MCF 10A (cell line): ENCODE measurements at regions of chr4 and their contacts with region 1.

Region 1: DNA sequence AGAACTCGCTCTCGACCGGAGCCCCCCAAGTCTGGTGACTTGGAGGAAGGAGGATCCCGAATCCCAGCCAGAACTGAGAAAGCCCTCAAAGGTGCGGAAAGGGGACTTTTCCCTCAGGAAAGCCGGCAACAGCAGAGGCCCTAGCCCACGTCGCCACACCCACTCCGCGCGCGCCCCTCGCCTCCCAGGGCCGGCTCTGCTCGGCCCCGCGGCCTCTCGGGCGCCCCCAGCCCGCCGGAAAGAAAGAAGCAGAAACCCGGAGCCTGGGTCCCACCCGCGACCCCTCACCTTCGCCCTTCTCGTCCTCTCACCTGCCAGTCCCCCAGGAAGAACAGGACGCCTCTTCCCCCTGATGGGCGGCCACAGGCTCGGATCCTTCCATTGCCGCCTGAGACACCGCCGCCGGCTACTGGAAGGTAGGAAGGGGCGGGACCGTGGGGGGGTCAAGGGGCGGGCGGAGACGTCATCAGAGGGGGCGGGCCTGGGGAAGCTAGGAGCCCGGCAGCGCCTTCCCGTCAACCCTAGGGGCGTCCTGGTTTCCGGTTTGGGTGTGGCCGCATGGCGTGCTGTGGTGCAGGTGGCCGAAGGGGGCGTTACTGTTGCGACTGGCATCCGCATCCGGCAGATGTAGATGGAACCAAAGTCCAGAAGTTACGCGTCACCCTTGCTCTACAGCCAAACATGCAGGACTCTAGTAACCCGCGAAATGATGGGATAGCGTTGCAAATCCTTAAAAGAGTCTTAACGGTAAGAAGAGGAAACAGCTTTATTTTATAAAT is at the start of gene UBA6:
- DNase-seq: peak; percentile 97
- H3K4me3 Mint-ChIP-seq: peak within 1 kb of the TSS; percentile 85
- H3K27ac Mint-ChIP-seq: peak within 1 kb of the TSS; percentile 95
- H3K4me1 Mint-ChIP-seq: peaks cover 26% of the 10 kb centered on the region
- H3K27me3 Mint-ChIP-seq: no peaks in the 10 kb centered on the region
- CTCF ChIP-seq: peak; percentile 40
- total RNA-seq, gene UBA6: 83.1 and 97.4 TPM in 2 replicates

Region 2: GRCh38 chr4:66949419-66949818 is 751.5 kb before region 1 on chr4:
- CTCF ChIA-PET with region 1: no interaction called
- POLR2A ChIA-PET with region 1: no interaction called
- intact Hi-C with region 1: no loop called
- DNase-seq: no peak
- H3K4me3 Mint-ChIP-seq: no peak overlapping the region
- H3K27ac Mint-ChIP-seq: no peak overlapping the region
- H3K4me1 Mint-ChIP-seq: no peaks in the 10 kb centered on the region
- H3K27me3 Mint-ChIP-seq: no peaks in the 10 kb centered on the region
- CTCF ChIP-seq: no peak

Region 3: GRCh38 chr4:67712000-67712625 is 11.2 kb after region 1 on chr4:
- CTCF ChIA-PET with region 1: interaction called, 5 read pairs
- POLR2A ChIA-PET with region 1: interaction called, 14 read pairs
- intact Hi-C with region 1: no loop called
- DNase-seq: no peak
- H3K4me3 Mint-ChIP-seq: no peak overlapping the region
- H3K27ac Mint-ChIP-seq: no peak overlapping the region
- H3K4me1 Mint-ChIP-seq: peaks cover 14% of the 10 kb centered on the region
- H3K27me3 Mint-ChIP-seq: no peaks in the 10 kb centered on the region
- CTCF ChIP-seq: no peak

Region 4: DNA sequence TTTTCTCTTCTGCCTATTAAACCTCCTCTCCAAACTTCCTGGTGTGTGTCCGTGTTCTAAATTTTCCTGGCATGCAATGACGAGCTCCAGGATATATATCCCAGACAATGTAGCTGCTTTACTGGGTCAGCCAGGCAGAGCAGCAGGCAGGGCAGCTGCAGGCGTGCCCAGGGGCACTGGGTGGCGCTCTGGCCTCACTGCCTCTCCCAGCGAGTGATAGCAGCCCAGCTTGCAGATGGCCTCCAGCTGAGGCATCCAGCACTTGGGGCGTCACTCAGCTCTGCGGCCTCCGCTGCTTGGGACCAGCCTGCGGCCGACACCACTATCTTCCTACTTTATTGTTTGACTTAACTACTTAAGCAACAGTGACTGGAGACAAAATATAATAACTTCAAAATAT is 23.0 kb after region 1 on chr4:
- CTCF ChIA-PET with region 1: interaction called, 7 read pairs
- POLR2A ChIA-PET with region 1: interaction called, 12 read pairs
- intact Hi-C with region 1: no loop called
- DNase-seq: no peak
- H3K4me3 Mint-ChIP-seq: no peak overlapping the region
- H3K27ac Mint-ChIP-seq: no peak overlapping the region
- H3K4me1 Mint-ChIP-seq: peaks cover 10% of the 10 kb centered on the region
- H3K27me3 Mint-ChIP-seq: no peaks in the 10 kb centered on the region
- CTCF ChIP-seq: no peak

Region 5: GRCh38 chr4:67736262-67736661 is 35.3 kb after region 1 on chr4:
- CTCF ChIA-PET with region 1: no interaction called
- POLR2A ChIA-PET with region 1: no interaction called
- intact Hi-C with region 1: no loop called
- DNase-seq: no peak
- H3K4me3 Mint-ChIP-seq: no peak overlapping the region
- H3K27ac Mint-ChIP-seq: no peak overlapping the region
- H3K4me1 Mint-ChIP-seq: no peaks in the 10 kb centered on the region
- H3K27me3 Mint-ChIP-seq: no peaks in the 10 kb centered on the region
- CTCF ChIP-seq: no peak

Region 6: GRCh38 chr4:67746797-67747495 is 46.0 kb after region 1 on chr4:
- CTCF ChIA-PET with region 1: interaction called, 5 read pairs
- POLR2A ChIA-PET with region 1: no interaction called
- intact Hi-C with region 1: loop called (anchors 2 kb)
- DNase-seq: peak; percentile 39
- H3K4me3 Mint-ChIP-seq: no peak overlapping the region
- H3K27ac Mint-ChIP-seq: no peak overlapping the region
- H3K4me1 Mint-ChIP-seq: peaks cover 10% of the 10 kb centered on the region
- H3K27me3 Mint-ChIP-seq: no peaks in the 10 kb centered on the region
- CTCF ChIP-seq: peak; percentile 48

Region 7: GRCh38 chr4:67762086-67762485 is 61.2 kb after region 1 on chr4:
- CTCF ChIA-PET with region 1: no interaction called
- POLR2A ChIA-PET with region 1: no interaction called
- intact Hi-C with region 1: no loop called
- DNase-seq: peak; percentile 2
- H3K4me3 Mint-ChIP-seq: no peak overlapping the region
- H3K27ac Mint-ChIP-seq: no peak overlapping the region
- H3K4me1 Mint-ChIP-seq: peaks cover 18% of the 10 kb centered on the region
- H3K27me3 Mint-ChIP-seq: no peaks in the 10 kb centered on the region
- CTCF ChIP-seq: no peak

Region 8: DNA sequence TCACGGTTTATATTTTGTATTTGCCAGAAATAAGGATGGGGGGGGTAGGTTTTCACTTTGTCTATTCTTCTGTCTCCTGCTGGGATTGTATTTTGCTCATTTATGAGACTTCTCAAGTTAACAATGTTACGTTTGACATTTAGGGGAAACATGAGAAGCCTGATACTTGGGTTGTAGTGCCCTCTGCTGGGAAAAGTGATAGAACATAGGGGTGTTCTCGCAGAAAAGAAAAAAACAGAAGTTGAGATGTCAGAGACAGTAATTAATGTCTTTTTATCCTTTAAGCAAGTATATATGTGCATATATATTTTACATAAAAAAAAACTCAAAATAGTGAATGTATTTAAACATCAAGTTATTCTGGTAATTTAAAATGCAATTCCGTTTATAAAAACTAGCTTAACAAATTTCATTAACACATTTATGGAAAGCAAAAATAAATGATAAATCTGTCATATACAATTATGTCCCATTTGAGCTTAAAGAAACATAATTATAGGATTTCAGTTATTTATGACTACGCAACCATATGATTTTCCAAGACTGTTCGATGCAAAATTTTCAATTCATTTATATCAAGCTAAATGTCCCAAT is 474.7 kb after region 1 on chr4:
- CTCF ChIA-PET with region 1: no interaction called
- POLR2A ChIA-PET with region 1: no interaction called
- intact Hi-C with region 1: no loop called
- DNase-seq: peak; percentile 81
- H3K4me3 Mint-ChIP-seq: no peak overlapping the region
- H3K27ac Mint-ChIP-seq: no peak overlapping the region
- H3K4me1 Mint-ChIP-seq: peaks cover 1% of the 10 kb centered on the region
- H3K27me3 Mint-ChIP-seq: no peaks in the 10 kb centered on the region
- CTCF ChIP-seq: peak; percentile 50